HepG2 (cell line): ENCODE measurements at regions of chr11 and their contacts with region 1.

Region 1: GRCh38 chr11:111395081-111395480 is 16.0 kb upstream of the POU2AF1 start:
- DNase-seq: peak; percentile 93
- ATAC-seq: peak; percentile 100
- H3K4me3 ChIP-seq: no peak overlapping the region
- H3K27ac ChIP-seq: peak overlapping the region; percentile 54
- H3K4me1 ChIP-seq: peaks cover 77% of the 10 kb centered on the region
- H3K27me3 ChIP-seq: no peaks in the 10 kb centered on the region
- CTCF ChIP-seq: peak; percentile 46
- EP300 ChIP-seq: peak in 1 of 2 experiments; percentile 73; a peak in 2 of 4 replicates
- POLR2A ChIP-seq: peak; percentile 40 to 46; a peak in 2 of 4 replicates
- RAD21 ChIP-seq: peak; percentile 73

Region 2: GRCh38 chr11:111365722-111366559 is 29.1 kb before region 1 on chr11:
- CTCF ChIA-PET with region 1: no interaction called
- POLR2A ChIA-PET with region 1: interaction called, 3 read pairs
- in situ Hi-C with region 1: no loop called
- intact Hi-C with region 1: loop called (anchors 1 kb)
- DNase-seq: peak; percentile 95
- ATAC-seq: peak; percentile 89
- H3K4me3 ChIP-seq: 0 out of 6 replicates have a peak overlapping the region, but pooled peaks of 1 of the 3 experiments have one; percentile 4
- H3K27ac ChIP-seq: peak overlapping the region; percentile 98
- H3K4me1 ChIP-seq: peaks cover 81% of the 10 kb centered on the region
- H3K27me3 ChIP-seq: no peaks in the 10 kb centered on the region
- CTCF ChIP-seq: no peak
- EP300 ChIP-seq: peak in 1 of 2 experiments; percentile 88; a peak in 1 of 4 replicates
- POLR2A ChIP-seq: no peak; a peak in 1 of 4 replicates
- RAD21 ChIP-seq: no peak; the same call in 1 of the 2 replicates